ENCODE measurements at regions of chr11 and their contacts with region 1.

Region 1: GRCh38 chr11:77820563-77821348 is at the starts of genes AAMDC and RSF1:
- DNase-seq: peak; percentile 96
- H3K4me3 Mint-ChIP-seq: peak within 1 kb of the TSS; percentile 99
- H3K27ac Mint-ChIP-seq: peak within 1 kb of the TSS; percentile 94
- H3K4me1 Mint-ChIP-seq: peaks cover 29% of the 10 kb centered on the region
- H3K27me3 Mint-ChIP-seq: no peaks in the 10 kb centered on the region
- total RNA-seq, gene AAMDC: 3.0 and 3.6 TPM in 2 replicates
- total RNA-seq, gene RSF1: 43.3 and 45.5 TPM in 2 replicates

Region 2: DNA sequence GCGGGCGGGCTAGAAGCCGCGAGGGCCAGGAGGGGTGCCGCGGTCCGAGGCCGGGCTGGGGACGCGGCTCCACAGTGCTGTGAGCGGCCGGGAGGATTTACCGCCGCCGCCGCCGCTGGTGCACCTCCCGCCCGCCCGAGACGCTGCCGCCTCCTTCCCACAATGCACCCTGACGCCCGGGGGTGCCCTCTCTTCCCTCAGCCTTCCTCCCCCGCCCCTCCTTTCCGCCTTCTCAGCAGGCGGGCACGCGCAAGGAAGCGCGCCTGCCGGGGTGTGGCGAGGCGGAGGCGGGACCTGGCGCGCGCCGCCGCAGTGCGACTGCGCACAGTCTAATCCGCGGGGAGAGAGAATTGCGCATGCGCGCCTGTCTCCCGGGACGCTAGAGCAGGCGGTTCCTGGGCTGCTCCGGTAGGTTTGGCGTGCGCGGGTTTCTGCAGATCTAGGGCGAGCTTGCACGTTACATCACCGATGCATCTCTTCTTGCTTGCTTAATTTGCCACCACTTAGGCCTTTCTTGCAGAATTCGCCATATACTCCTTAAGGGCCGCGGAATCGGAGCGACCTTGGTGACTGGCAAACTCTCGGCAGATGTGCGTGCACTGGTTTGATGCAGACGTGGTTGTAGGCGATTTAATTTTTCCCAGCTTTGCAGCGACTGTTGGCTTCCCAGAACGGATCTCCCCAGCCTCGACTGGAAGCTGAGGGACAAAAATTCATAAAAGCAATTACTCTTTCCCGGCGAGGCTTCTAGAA is 1439.6 kb before region 1 on chr11 and contains the starts of genes GVQW3 and THAP12:
- intact Hi-C with region 1: loop called (anchors 5 kb)
- DNase-seq: peak; percentile 96
- H3K4me3 Mint-ChIP-seq: peak within 1 kb of the TSS; percentile 95
- H3K27ac Mint-ChIP-seq: peak within 1 kb of the TSS; percentile 89
- H3K4me1 Mint-ChIP-seq: peaks cover 49% of the 10 kb centered on the region
- H3K27me3 Mint-ChIP-seq: no peaks in the 10 kb centered on the region
- total RNA-seq, gene GVQW3: 4.3 and 4.4 TPM in 2 replicates
- total RNA-seq, gene THAP12: 63.1 and 66.0 TPM in 2 replicates

Region 3: GRCh38 chr11:77637345-77638165 is 183.2 kb before region 1 on chr11 and contains the start of gene CLNS1A:
- intact Hi-C with region 1: loop called (anchors 1 kb)
- DNase-seq: peak; percentile 76
- H3K4me3 Mint-ChIP-seq: peak within 1 kb of the TSS; percentile 90
- H3K27ac Mint-ChIP-seq: peak within 1 kb of the TSS; percentile 91
- H3K4me1 Mint-ChIP-seq: peaks cover 27% of the 10 kb centered on the region
- H3K27me3 Mint-ChIP-seq: no peaks in the 10 kb centered on the region
- total RNA-seq, gene CLNS1A: 153 and 157 TPM in 2 replicates

Region 4: GRCh38 chr11:77776455-77776854 is 44.3 kb before region 1 on chr11:
- intact Hi-C with region 1: loop called (anchors 5 kb)
- DNase-seq: no peak
- H3K4me3 Mint-ChIP-seq: no peak overlapping the region
- H3K27ac Mint-ChIP-seq: no peak overlapping the region
- H3K4me1 Mint-ChIP-seq: peaks cover 19% of the 10 kb centered on the region
- H3K27me3 Mint-ChIP-seq: no peaks in the 10 kb centered on the region

Region 5: DNA sequence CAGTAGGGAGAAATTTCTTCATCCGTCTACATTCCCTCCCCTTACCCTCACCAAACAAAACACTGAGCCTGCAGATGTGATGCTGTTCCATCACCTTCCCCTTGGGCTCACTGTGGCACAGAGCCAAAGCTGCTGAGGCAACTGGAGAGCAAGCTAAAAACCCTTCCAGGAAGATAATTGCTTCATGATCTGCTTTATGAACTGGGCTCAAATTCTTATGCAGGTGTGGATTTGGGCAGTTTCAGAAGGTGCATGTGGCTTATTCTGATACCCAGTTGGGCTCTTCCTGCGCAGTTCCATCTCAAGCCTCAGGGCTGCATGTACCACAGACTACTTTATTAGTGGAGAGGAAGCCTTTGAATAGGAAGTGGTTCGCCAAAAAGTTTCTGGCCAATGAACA is 58.5 kb after region 1 on chr11:
- intact Hi-C with region 1: no loop called
- DNase-seq: peak; percentile 13
- H3K4me3 Mint-ChIP-seq: no peak overlapping the region
- H3K27ac Mint-ChIP-seq: no peak overlapping the region
- H3K4me1 Mint-ChIP-seq: peaks cover 14% of the 10 kb centered on the region
- H3K27me3 Mint-ChIP-seq: no peaks in the 10 kb centered on the region

Region 6: GRCh38 chr11:77994412-77995362 is 173.9 kb after region 1 on chr11 and contains the start of gene INTS4:
- intact Hi-C with region 1: loop called (anchors 1 kb)
- DNase-seq: peak; percentile 99
- H3K4me3 Mint-ChIP-seq: peak within 1 kb of the TSS; percentile 91
- H3K27ac Mint-ChIP-seq: peak within 1 kb of the TSS; percentile 76
- H3K4me1 Mint-ChIP-seq: peaks cover 15% of the 10 kb centered on the region
- H3K27me3 Mint-ChIP-seq: no peaks in the 10 kb centered on the region
- total RNA-seq, gene INTS4: 62.7 and 66.8 TPM in 2 replicates

Region 7: GRCh38 chr11:78188286-78189173 is 367.8 kb after region 1 on chr11 and contains the starts of genes KCTD21 and USP35:
- intact Hi-C with region 1: loop called (anchors 5 kb)
- DNase-seq: peak; percentile 93
- H3K4me3 Mint-ChIP-seq: peak within 1 kb of the TSS; percentile 97
- H3K27ac Mint-ChIP-seq: peak within 1 kb of the TSS; percentile 99
- H3K4me1 Mint-ChIP-seq: peaks cover 49% of the 10 kb centered on the region
- H3K27me3 Mint-ChIP-seq: no peaks in the 10 kb centered on the region
- total RNA-seq, gene KCTD21: 10.0 and 10.4 TPM in 2 replicates
- total RNA-seq, gene USP35: 12.9 and 14.6 TPM in 2 replicates

Region 8: GRCh38 chr11:78574386-78575381 is 753.9 kb after region 1 on chr11 and contains the start of gene NARS2:
- intact Hi-C with region 1: loop called (anchors 5 kb)
- DNase-seq: peak; percentile 95
- H3K4me3 Mint-ChIP-seq: peak within 1 kb of the TSS; percentile 93
- H3K27ac Mint-ChIP-seq: peak within 1 kb of the TSS; percentile 93
- H3K4me1 Mint-ChIP-seq: peaks cover 31% of the 10 kb centered on the region
- H3K27me3 Mint-ChIP-seq: peaks cover 3% of the 10 kb centered on the region
- total RNA-seq, gene NARS2: 34.1 and 37.7 TPM in 2 replicates